ENCODE measurements at regions of chr5 and their contacts with region 1.

Region 1: DNA sequence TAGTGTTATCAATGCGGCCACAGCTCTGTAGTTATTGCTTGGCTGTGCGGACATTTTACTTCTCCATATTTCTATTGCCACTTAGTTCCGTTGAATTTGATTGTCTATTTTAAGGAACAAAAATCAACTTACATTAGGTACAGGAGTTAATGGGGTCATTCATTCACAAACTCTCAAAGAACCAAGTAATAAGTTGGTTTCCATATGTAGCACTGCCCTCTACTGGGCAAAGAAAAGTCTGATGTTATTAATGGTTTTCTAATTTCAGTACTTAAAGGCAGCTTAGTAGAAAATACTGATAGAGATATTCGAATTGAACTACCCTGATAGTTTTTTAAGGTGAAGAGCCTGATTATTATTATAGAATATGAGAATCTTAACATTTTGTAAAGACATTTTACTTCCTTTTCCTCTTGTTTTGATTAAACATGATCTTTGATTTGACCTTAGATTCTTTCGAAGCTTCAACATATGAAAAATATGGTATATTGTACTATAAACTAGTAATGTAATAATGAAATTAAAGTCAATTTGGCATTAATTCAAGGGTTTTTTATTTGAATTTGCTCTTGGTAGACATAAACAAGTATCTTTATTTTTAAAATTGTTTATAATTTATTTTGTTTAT is 119.5 kb upstream of the CTNND2 start:
- DNase-seq: no peak
- ATAC-seq: no peak
- H3K4me3 Mint-ChIP-seq: no peak overlapping the region
- H3K27ac Mint-ChIP-seq: no peak overlapping the region
- H3K4me1 Mint-ChIP-seq: no peaks in the 10 kb centered on the region
- H3K27me3 Mint-ChIP-seq: no peaks in the 10 kb centered on the region
- CTCF ChIP-seq: no peak

Region 2: DNA sequence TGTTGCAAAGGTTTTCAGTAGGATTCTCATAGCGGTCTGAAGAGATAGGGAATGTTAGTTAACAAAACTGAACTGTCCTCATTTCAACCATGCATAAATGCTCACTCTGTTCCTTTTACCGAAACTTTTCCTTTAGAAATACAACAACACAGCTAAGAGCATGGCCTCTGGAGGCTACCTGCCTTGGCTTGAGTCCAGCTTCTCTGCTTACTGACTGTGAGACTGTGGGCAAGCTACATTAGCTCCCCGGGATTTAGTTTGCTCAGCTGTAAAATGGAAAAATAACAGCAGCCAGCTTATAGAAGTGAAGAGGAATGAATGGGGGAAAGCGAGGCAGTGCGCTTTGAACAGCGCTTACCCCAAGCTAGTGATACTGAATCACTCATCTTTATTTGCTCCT is 754.8 kb before region 1 on chr5:
- CTCF ChIA-PET with region 1: no interaction called
- POLR2A ChIA-PET with region 1: no interaction called
- intact Hi-C with region 1: loop called (anchors 5 kb)
- DNase-seq: no peak
- ATAC-seq: no peak
- H3K4me3 Mint-ChIP-seq: no peak overlapping the region
- H3K27ac Mint-ChIP-seq: no peak overlapping the region
- H3K4me1 Mint-ChIP-seq: no peaks in the 10 kb centered on the region
- H3K27me3 Mint-ChIP-seq: peaks cover 2% of the 10 kb centered on the region
- CTCF ChIP-seq: no peak

Region 3: GRCh38 chr5:11719888-11720481 is 303.7 kb before region 1 on chr5:
- CTCF ChIA-PET with region 1: no interaction called
- POLR2A ChIA-PET with region 1: no interaction called
- intact Hi-C with region 1: no loop called
- DNase-seq: no peak
- ATAC-seq: no peak
- H3K4me3 Mint-ChIP-seq: no peak overlapping the region
- H3K27ac Mint-ChIP-seq: no peak overlapping the region
- H3K4me1 Mint-ChIP-seq: no peaks in the 10 kb centered on the region
- H3K27me3 Mint-ChIP-seq: no peaks in the 10 kb centered on the region
- CTCF ChIP-seq: no peak